ENCODE measurements at regions of chr1 and their contacts with region 1.

Region 1: DNA sequence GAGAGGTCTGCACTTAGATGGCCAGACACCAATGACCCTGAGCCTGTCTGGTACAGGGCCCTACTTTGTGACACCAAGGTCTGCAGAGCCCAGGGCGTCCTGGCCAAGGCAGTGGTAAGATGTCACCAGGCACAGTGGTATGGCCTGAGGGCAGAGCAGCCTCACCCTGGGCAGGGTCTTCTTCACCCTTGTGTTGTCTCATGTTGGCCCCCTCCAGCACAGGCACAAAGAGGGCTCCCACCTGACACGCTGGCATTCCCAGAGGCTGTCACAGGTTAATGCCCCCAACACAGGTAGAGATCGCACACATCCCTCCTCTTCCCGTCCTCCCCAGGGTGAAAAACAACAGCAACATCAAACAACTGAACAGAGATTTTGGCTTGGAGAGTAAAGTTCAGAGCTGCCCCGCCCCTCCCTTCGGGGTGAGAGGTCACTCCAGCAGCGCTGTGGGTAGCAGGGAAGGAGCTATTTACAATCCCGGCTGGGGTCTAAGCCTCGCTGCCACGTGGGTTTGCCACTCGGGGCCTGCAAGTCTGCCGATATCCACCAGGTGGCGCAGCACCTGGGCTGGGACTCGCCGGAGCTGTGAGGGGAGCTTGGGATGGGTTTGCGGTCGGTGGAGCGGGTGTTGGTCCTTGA is 12.6 kb downstream of the EFNA3 start:
- DNase-seq: peak; percentile 70 to 87 (median 82)
- H3K4me3 ChIP-seq: no peak overlapping the region
- H3K27ac ChIP-seq: no peak overlapping the region
- H3K4me1 ChIP-seq: peaks cover 8% of the 10 kb centered on the region
- H3K27me3 ChIP-seq: no peaks in the 10 kb centered on the region
- CTCF ChIP-seq: peak; percentile 90 to 93 (median 92)
- EP300 ChIP-seq: no peak
- POLR2A ChIP-seq: no peak

Region 2: GRCh38 chr1:155026593-155026992 is 64.6 kb before region 1 on chr1:
- intact Hi-C with region 1: no loop called
- DNase-seq: no peak
- H3K4me3 ChIP-seq: no peak overlapping the region
- H3K27ac ChIP-seq: no peak overlapping the region
- H3K4me1 ChIP-seq: no peaks in the 10 kb centered on the region
- H3K27me3 ChIP-seq: no peaks in the 10 kb centered on the region
- CTCF ChIP-seq: no peak
- EP300 ChIP-seq: no peak
- POLR2A ChIP-seq: no peak

Region 3: GRCh38 chr1:155127105-155127964 is 36.1 kb after region 1 on chr1 and contains the start of gene EFNA1:
- intact Hi-C with region 1: loop called in 2 of 4 experiments (anchors 5 kb)
- DNase-seq: peak; percentile 44 to 76 (median 59)
- H3K4me3 ChIP-seq: peak within 1 kb of the TSS; percentile 63
- H3K27ac ChIP-seq: peak within 1 kb of the TSS in 1 of 2 donors; percentile 33
- H3K4me1 ChIP-seq: peaks cover 15% of the 10 kb centered on the region
- H3K27me3 ChIP-seq: no peaks in the 10 kb centered on the region
- CTCF ChIP-seq: no peak
- EP300 ChIP-seq: peak; percentile 54
- POLR2A ChIP-seq: no peak
- total RNA-seq, gene EFNA1: 12.1 to 51.6 (median 16.6) TPM

Region 4: GRCh38 chr1:155167166-155168104 is 76.2 kb after region 1 on chr1:
- intact Hi-C with region 1: loop called (anchors 2 to 5 kb)
- DNase-seq: peak; percentile 77 to 90 (median 84)
- H3K4me3 ChIP-seq: no peak overlapping the region
- H3K27ac ChIP-seq: peak overlapping the region; percentile 20 to 31
- H3K4me1 ChIP-seq: peaks cover 7% of the 10 kb centered on the region
- H3K27me3 ChIP-seq: no peaks in the 10 kb centered on the region
- CTCF ChIP-seq: peak; percentile 40 to 93 (median 76)
- EP300 ChIP-seq: no peak
- POLR2A ChIP-seq: no peak

Measured in ovary (tissue), 10 donors.